Activated CD4-positive, alpha-beta memory T cell treated with anti-CD3 and anti-CD28 coated beads for 36 hours (primary cell): ENCODE measurements at regions of chr11 and their contacts with region 1.

Region 1: DNA sequence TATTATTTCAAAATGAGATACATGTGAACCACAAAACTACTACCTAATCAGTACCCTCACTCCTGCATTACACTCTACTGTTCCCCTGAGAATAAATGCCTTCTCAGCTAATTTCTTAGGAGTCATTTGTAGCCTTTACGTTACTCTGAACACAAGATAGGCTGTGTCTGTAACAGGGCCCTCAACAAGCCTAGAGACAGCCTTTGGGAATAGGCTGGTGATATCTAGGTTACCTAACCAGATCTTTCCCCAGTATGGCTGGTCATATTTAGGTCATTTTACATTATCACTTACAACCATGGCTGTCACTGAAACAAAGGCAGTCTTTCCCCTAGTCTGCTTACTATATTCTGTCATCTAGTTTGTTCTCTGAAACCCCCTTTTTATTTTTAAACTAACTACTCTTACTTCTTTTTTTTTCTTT is 14.2 kb downstream of the ATM start:
- DNase-seq: no peak
- H3K4me3 Mint-ChIP-seq: peak overlapping the region; percentile 31
- H3K27ac Mint-ChIP-seq: peak overlapping the region; percentile 76
- H3K4me1 Mint-ChIP-seq: peaks cover 72% of the 10 kb centered on the region
- H3K27me3 Mint-ChIP-seq: no peaks in the 10 kb centered on the region

Region 2: GRCh38 chr11:107882095-107882820 is 354.8 kb before region 1 on chr11:
- CTCF ChIA-PET with region 1: no interaction called
- POLR2A ChIA-PET with region 1: no interaction called
- intact Hi-C with region 1: no loop called
- DNase-seq: no peak
- H3K4me3 Mint-ChIP-seq: no peak overlapping the region
- H3K27ac Mint-ChIP-seq: no peak overlapping the region
- H3K4me1 Mint-ChIP-seq: no peaks in the 10 kb centered on the region
- H3K27me3 Mint-ChIP-seq: peaks cover 2% of the 10 kb centered on the region

Region 3: GRCh38 chr11:108199446-108200321 is 37.4 kb before region 1 on chr11:
- CTCF ChIA-PET with region 1: no interaction called
- POLR2A ChIA-PET with region 1: interaction called, 5 read pairs
- intact Hi-C with region 1: loop called (anchors 1 kb)
- DNase-seq: peak; percentile 91
- H3K4me3 Mint-ChIP-seq: no peak overlapping the region
- H3K27ac Mint-ChIP-seq: peak overlapping the region; percentile 76
- H3K4me1 Mint-ChIP-seq: peaks cover 89% of the 10 kb centered on the region
- H3K27me3 Mint-ChIP-seq: no peaks in the 10 kb centered on the region

Region 4: DNA sequence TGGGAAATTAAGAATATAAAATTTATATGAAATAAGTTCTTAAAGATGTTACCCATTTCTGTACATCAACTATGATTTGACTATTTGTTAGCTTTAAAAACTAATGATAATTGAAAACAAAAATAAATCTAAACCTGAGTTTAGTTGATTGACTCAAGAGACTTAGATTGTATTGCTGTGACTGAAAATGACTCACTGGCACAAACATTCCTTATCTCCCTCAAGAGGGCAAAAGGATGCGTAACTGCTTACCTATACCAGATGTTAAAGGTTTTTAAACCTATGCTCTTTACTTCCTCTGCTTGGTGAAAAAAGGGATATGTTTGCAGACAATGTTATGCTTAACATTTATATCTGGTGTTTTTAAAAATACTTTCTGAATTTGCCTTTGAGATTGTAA is 16.1 kb after region 1 on chr11:
- CTCF ChIA-PET with region 1: interaction called, 5 read pairs
- POLR2A ChIA-PET with region 1: no interaction called
- intact Hi-C with region 1: loop called (anchors 1 kb)
- DNase-seq: no peak
- H3K4me3 Mint-ChIP-seq: no peak overlapping the region
- H3K27ac Mint-ChIP-seq: no peak overlapping the region
- H3K4me1 Mint-ChIP-seq: peaks cover 36% of the 10 kb centered on the region
- H3K27me3 Mint-ChIP-seq: no peaks in the 10 kb centered on the region

Region 5: DNA sequence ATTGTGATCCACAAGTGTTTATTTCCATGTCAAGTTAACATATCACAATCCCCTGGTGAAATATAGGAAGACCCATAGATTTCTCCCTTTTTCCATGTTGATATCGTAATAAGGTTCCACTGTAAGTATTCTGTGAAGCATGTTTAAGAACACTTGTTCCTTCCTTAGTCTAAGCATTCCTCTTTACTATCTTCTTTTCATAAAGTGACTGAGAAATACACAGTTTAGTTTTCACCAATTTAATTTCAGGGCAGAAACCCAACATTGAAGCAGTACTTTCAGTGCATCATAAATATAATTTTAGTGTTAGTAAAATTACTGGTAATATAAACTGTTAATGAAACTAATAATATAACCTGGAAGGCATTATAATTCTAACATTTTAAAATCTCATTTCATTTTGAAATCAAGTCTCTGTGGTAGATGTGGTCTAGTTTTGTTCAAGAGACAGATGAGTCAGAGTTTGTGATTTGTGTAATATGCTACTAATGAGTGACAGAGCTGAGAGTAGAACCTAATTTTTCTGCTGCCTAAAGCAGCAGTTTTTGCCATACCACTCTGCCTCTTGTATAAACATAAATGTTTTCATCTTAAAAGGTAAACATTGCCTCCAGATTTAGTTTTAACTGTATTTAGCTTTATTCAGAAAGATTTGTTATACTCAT is 65.2 kb after region 1 on chr11:
- CTCF ChIA-PET with region 1: no interaction called
- POLR2A ChIA-PET with region 1: no interaction called
- intact Hi-C with region 1: loop called (anchors 2 kb)
- DNase-seq: no peak
- H3K4me3 Mint-ChIP-seq: no peak overlapping the region
- H3K27ac Mint-ChIP-seq: no peak overlapping the region
- H3K4me1 Mint-ChIP-seq: peaks cover 20% of the 10 kb centered on the region
- H3K27me3 Mint-ChIP-seq: no peaks in the 10 kb centered on the region

Region 6: GRCh38 chr11:108620958-108621772 is 384.1 kb after region 1 on chr11:
- CTCF ChIA-PET with region 1: no interaction called
- POLR2A ChIA-PET with region 1: no interaction called
- intact Hi-C with region 1: loop called (anchors 1 kb)
- DNase-seq: no peak
- H3K4me3 Mint-ChIP-seq: no peak overlapping the region
- H3K27ac Mint-ChIP-seq: no peak overlapping the region
- H3K4me1 Mint-ChIP-seq: peaks cover 21% of the 10 kb centered on the region
- H3K27me3 Mint-ChIP-seq: peaks cover 20% of the 10 kb centered on the region